Motor neuron (in vitro differentiated cells): ENCODE measurements at regions of chr12 and their contacts with region 1.

Region 1: GRCh38 chr12:53180220-53180930 is at the starts of genes CSAD and ZNF740:
- ATAC-seq: peak; percentile 89 to 96 (median 95)
- H3K4me3 ChIP-seq: peak within 1 kb of the TSS; percentile 48 to 75 (median 59)
- H3K27ac ChIP-seq: peak within 1 kb of the TSS; percentile 92 to 96
- H3K4me1 ChIP-seq: peaks cover 28 to 33% of the 10 kb centered on the region in 2 donors
- total RNA-seq, gene CSAD: 8.0 to 106 (median 27.7) TPM
- total RNA-seq, gene ZNF740: 13.8 to 39.8 (median 19.1) TPM

Region 2: GRCh38 chr12:52691076-52691840 is 489.1 kb before region 1 on chr12:
- in situ Hi-C with region 1: no loop called
- ATAC-seq: peak in 7 of 8 experiments; percentile 41 to 85 (median 61)
- H3K4me3 ChIP-seq: peak overlapping the region; percentile 11 to 27 (median 17)
- H3K27ac ChIP-seq: no peak overlapping the region
- H3K4me1 ChIP-seq: no peaks in the 10 kb centered on the region

Region 3: DNA sequence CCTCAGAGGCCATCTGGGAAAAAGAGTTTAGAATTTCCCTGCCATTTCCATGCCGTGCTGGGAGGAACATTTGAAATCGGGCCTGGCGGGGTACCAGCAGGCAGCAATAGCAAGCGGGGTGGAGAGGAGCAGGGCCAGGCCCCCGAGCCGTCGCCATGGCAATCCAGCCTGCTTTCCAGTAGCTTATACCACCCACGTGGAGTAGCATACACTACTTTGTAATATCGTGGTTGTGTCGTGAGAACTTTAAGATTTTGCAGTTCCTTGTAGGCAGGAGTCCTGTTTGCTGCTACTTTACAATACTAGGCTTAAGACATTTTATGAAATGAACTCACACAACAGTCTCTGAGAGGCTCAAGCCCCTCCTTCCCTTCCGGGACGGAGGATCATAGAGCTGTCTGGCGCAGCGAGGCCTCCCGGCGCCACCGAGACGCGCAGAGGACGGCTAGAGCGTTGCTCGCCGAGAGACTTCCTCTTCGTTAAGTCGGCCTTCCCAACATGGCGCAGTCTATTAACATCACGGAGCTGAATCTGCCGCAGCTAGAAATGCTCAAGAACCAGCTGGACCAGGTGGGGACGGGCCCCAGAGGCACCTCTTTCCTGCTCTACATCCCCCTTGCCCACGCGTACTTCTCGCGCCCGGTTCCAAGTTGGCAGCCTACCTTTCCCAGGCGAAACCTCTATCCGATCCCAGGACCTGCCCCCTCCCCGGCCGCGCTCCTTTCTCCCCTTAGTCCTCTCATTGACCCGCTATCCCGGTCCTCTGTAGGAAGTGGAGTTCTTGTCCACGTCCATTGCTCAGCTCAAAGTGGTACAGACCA is 114.9 kb after region 1 on chr12 and contains the start of gene PFDN5:
- in situ Hi-C with region 1: loop called in 1 of 9 experiments (anchors 25 kb)
- ATAC-seq: peak; percentile 76 to 85 (median 80)
- H3K4me3 ChIP-seq: peak within 1 kb of the TSS; percentile 59 to 85 (median 82)
- H3K27ac ChIP-seq: peak within 1 kb of the TSS; percentile 71 to 88
- H3K4me1 ChIP-seq: peaks cover 14 to 18% of the 10 kb centered on the region in 2 donors
- total RNA-seq, gene PFDN5: 433 to 1,182 (median 923) TPM